ENCODE measurements at regions of chr3 and their contacts with region 1.

Region 1: DNA sequence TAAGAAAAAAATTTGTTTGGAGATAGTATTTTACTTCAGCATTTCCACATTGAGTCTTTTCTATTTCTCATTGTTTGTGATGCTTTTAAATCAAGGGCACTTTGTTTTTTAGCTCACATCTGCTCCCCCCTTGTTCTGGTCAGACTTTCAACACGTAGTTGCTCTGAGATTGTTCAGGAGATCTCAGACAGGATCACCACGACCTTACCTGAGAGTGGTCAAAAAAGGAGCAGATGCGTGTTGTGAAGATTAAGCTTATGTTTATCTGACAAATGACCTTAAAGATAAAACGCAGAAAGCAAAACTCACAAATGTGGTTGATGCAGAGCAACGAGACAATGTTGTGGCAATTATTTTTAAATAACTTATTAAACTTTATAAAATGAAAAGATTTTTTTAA is 298.3 kb downstream of the ROBO2 start:
- DNase-seq: no peak
- ATAC-seq: no peak
- H3K4me3 ChIP-seq: no peak overlapping the region
- H3K27ac ChIP-seq: no peak overlapping the region
- H3K4me1 ChIP-seq: no peaks in the 10 kb centered on the region
- H3K27me3 ChIP-seq: no peaks in the 10 kb centered on the region
- CTCF ChIP-seq: no peak
- POLR2A ChIP-seq: no peak
- RAD21 ChIP-seq: no peak

Region 2: DNA sequence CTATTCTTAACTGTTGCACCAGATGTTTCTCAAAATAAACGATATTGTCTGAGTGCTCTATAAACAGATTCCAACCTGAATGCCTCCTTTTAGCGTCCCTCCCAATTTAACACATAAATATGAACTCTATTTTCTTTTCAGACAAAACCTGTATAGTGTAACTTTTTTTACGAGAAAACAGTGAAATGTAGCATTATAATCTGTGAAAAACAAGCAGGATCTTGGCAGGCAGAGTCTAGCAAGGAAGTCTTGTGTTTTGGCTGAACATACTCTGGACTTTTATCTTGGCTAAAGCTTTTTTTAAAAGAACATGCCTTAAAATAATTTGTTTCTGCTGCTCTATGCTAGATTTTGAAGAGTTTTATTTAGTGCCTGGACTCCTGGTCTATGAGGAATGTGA is 147.8 kb before region 1 on chr3:
- CTCF ChIA-PET with region 1: no interaction called
- POLR2A ChIA-PET with region 1: no interaction called
- dilution Hi-C with region 1: no loop called
- in situ Hi-C with region 1: no loop called
- intact Hi-C with region 1: no loop called
- DNase-seq: no peak
- ATAC-seq: no peak
- H3K4me3 ChIP-seq: no peak overlapping the region
- H3K27ac ChIP-seq: no peak overlapping the region
- H3K4me1 ChIP-seq: no peaks in the 10 kb centered on the region
- H3K27me3 ChIP-seq: no peaks in the 10 kb centered on the region
- CTCF ChIP-seq: no peak
- POLR2A ChIP-seq: no peak
- RAD21 ChIP-seq: no peak

Region 3: GRCh38 chr3:77506384-77506783 is 168.2 kb after region 1 on chr3:
- CTCF ChIA-PET with region 1: no interaction called
- POLR2A ChIA-PET with region 1: no interaction called
- dilution Hi-C with region 1: no loop called
- in situ Hi-C with region 1: no loop called
- intact Hi-C with region 1: no loop called
- DNase-seq: no peak
- ATAC-seq: no peak
- H3K4me3 ChIP-seq: no peak overlapping the region
- H3K27ac ChIP-seq: no peak overlapping the region
- H3K4me1 ChIP-seq: no peaks in the 10 kb centered on the region
- H3K27me3 ChIP-seq: no peaks in the 10 kb centered on the region
- CTCF ChIP-seq: no peak
- POLR2A ChIP-seq: no peak
- RAD21 ChIP-seq: no peak

Region 4: GRCh38 chr3:77524467-77524866 is 186.3 kb after region 1 on chr3:
- CTCF ChIA-PET with region 1: no interaction called
- POLR2A ChIA-PET with region 1: no interaction called
- dilution Hi-C with region 1: no loop called
- in situ Hi-C with region 1: no loop called
- intact Hi-C with region 1: no loop called
- DNase-seq: no peak
- ATAC-seq: no peak
- H3K4me3 ChIP-seq: no peak overlapping the region
- H3K27ac ChIP-seq: no peak overlapping the region
- H3K4me1 ChIP-seq: no peaks in the 10 kb centered on the region
- H3K27me3 ChIP-seq: no peaks in the 10 kb centered on the region
- CTCF ChIP-seq: no peak
- POLR2A ChIP-seq: no peak
- RAD21 ChIP-seq: no peak

Region 5: DNA sequence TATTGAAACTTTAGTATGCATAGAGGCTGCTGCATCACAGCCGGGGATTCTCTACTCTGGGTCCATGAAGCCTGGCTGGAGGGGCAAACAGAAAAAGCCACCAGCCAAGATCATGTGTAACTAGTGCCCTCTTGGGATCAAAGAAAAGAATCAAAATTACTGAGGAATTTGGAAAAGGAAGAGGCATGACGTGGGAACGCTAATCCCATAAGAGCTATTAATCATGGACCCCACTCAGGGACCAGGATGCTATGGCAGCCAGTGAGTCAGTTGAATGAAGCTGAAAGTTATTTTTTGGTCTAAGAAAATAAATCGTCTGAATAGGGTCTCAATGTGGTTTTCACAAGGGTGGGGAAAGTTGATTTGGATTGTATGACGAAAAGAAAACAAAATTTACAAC is 866.8 kb after region 1 on chr3:
- CTCF ChIA-PET with region 1: no interaction called
- POLR2A ChIA-PET with region 1: no interaction called
- dilution Hi-C with region 1: no loop called
- in situ Hi-C with region 1: no loop called
- intact Hi-C with region 1: loop called (anchors 10 kb)
- DNase-seq: peak; percentile 67
- ATAC-seq: peak; percentile 80
- H3K4me3 ChIP-seq: peak overlapping the region; percentile 7; the same call in 1 of the 2 replicates
- H3K27ac ChIP-seq: no peak overlapping the region
- H3K4me1 ChIP-seq: no peaks in the 10 kb centered on the region
- H3K27me3 ChIP-seq: no peaks in the 10 kb centered on the region
- CTCF ChIP-seq: peak; percentile 33; the same call in 1 of the 2 replicates
- POLR2A ChIP-seq: no peak
- RAD21 ChIP-seq: peak; percentile 61

Measured in IMR-90 (cell line).